Cardiac septum (tissue), 1 donor: ENCODE measurements at regions of chr2 and their contacts with region 1.

Region 1: GRCh38 chr2:228377533-228377932 is 196.0 kb upstream of the SPHKAP start:
- DNase-seq: no peak

Region 2: DNA sequence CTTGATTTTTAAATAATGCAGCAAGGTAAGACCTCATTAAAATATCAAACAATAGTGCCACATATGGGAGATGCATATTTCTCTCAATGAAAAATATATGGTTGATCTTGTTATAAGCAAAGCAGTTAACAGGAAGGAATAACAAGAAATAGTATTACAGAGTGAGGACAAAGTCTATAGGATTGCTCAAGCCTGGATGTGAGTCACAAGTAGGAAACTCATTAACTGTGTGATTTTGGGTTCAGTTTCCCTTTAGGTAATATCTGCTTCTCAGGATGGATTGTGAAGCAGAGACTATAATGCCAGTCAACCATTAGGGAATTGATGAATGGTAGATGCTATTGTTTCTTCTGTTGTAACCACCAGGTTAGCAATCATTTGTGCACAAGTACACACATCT is 153.1 kb before region 1 on chr2:
- intact Hi-C with region 1: no loop called
- DNase-seq: no peak

Region 3: DNA sequence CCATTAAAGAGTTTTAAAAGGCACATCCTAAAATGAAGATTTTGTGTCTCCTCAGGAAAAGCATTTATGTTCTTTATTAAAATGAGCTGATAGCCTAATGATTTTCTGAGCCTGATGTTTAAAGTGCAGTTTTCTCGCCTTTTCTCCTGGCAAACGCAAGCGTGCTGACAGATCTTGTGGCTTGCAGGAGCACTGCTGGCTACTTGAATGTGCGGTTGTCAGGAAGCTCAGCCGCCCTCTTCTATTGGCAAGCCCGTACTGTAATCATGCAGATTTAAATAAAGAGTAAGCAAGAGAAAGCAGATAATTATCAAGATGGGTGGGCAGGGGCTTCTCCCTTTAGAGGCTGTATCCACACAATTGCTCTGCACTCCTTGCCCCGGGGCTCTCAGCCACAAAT is 56.5 kb before region 1 on chr2:
- intact Hi-C with region 1: no loop called
- DNase-seq: no peak

Region 4: GRCh38 chr2:228334180-228334579 is 43.4 kb before region 1 on chr2:
- intact Hi-C with region 1: loop called (anchors 5 kb)
- DNase-seq: no peak

Region 5: DNA sequence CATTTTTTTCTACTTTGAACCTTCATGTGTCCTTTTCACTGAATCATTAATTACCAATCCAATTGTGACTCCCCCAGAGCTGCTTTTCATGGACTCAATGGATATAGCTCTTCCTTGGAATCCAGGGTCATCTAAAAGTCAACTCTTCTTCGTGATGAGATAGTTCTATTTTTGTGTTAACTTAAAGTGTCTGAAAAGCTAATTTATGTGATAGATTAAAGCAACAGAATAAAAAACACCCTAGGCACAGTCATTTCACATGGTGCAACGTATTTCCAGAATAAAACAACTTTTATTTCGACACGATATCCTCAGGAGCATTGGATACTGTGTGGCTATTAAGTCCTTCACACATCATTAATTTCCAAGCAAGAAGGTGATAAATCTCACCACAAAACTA is 54.6 kb after region 1 on chr2:
- intact Hi-C with region 1: no loop called
- DNase-seq: no peak

Region 6: GRCh38 chr2:228646061-228646460 is 268.5 kb after region 1 on chr2:
- intact Hi-C with region 1: loop called (anchors 5 kb)
- DNase-seq: no peak